ENCODE measurements at regions of chr15 and their contacts with region 1.

Region 1: GRCh38 chr15:90931737-90932659 is at the start of gene HDDC3:
- DNase-seq: peak; percentile 96
- ATAC-seq: peak; percentile 68
- H3K4me3 Mint-ChIP-seq: peak within 1 kb of the TSS; percentile 99
- H3K27ac Mint-ChIP-seq: peak within 1 kb of the TSS; percentile 99
- H3K4me1 Mint-ChIP-seq: peaks cover 47% of the 10 kb centered on the region
- H3K27me3 Mint-ChIP-seq: no peaks in the 10 kb centered on the region
- total RNA-seq, gene HDDC3: 34.2 to 41.2 TPM

Region 2: DNA sequence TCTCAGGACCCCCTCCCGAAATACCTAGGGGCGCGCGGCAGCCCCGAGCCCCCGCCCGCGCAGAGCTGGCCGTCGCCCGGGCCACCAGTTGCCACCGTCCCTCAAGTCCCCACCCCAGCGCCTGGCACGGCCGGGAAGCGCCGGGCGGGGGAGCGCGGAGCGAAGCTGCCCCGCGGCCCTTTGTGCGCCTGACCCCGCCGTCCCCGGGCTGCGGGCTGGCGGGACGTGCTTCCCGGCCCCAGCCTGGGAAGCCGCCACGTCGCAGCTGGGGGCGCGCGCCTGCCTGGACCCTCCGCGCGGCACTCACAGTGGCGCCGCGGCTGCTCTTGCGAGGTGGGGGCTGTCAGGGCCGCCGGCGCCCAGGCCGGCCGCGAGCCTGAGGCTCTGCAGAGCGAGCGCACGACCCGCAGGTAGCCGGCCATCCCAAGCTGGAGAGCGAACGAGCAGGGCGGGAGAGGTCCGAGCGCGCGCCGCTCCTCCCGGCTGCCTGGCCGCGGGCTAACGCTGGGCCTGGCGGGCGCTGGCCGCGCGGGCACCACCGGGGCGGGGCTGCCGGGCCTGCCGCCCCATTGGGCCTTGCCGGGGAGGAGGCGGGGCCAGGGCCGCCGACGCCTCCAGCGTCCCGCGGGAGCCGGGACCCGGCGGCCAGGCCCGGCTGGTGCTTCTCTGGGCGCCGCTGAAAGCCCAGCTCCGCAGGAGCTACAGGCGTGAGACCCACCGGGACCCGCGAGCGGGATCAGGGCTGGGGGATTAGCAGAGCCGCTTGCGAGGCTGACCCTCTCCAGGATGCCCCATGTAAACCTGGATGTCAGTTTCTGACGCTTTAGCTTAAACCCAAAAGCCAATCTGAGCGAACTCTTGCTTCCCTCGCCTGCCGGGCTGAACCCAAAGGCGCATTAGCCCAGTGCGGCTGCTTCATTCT is 829.8 kb before region 1 on chr15 and contains the start of gene IDH2:
- CTCF ChIA-PET with region 1: no interaction called
- POLR2A ChIA-PET with region 1: no interaction called
- intact Hi-C with region 1: loop called in 1 of 2 experiments (anchors 5 kb)
- DNase-seq: peak; percentile 85
- ATAC-seq: peak; percentile 73
- H3K4me3 Mint-ChIP-seq: peak within 1 kb of the TSS; percentile 86
- H3K27ac Mint-ChIP-seq: peak within 1 kb of the TSS; percentile 90
- H3K4me1 Mint-ChIP-seq: peaks cover 47% of the 10 kb centered on the region
- H3K27me3 Mint-ChIP-seq: no peaks in the 10 kb centered on the region
- total RNA-seq, gene IDH2: 176 to 182 TPM

Region 3: DNA sequence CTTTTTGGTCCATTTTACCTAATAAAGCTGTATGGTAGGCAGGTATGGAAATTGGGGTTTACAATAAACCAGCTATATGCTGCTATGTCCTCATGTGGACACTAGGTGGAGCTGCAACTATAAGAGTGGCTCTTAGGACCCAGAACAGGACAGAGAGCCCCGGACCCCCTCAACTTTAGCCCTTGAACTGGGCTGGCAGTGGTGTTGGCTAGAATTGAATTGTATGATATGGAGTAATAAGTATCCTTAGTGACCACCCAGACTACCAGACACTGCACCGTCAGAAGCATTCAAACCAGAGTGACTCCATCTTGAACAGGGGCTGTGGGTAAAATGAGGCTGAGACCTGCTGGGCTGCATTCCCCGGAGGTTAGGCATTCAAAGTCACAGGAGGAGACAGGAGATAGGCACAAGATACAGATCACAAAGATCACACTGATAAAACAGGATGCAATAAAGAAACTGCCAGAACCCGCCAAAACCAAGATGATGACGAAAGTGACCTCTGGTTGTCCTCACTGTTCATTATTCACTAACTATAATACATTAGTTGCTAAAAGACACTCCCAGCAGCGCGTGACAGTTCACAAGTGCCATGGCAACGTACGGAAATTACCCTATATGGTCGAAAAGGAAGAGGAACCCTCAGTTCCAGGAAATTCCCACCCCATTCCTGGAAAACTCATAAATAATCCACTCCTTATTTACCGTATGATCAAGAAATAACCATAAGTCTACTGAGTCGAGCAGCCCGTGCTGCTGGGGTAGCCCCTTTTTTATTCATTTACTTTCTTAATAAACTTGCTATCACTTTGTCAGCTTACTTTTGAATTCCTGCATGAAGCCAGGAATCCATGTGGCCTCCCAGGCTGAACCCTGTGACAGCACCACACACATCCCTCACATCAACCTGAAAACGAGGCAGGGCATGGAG is 283.6 kb before region 1 on chr15:
- CTCF ChIA-PET with region 1: interaction called, 13 read pairs
- POLR2A ChIA-PET with region 1: no interaction called
- intact Hi-C with region 1: loop called (anchors 1 kb)
- DNase-seq: peak; percentile 78
- ATAC-seq: peak; percentile 82
- H3K4me3 Mint-ChIP-seq: peak overlapping the region; percentile 39
- H3K27ac Mint-ChIP-seq: peak overlapping the region; percentile 93
- H3K4me1 Mint-ChIP-seq: peaks cover 28% of the 10 kb centered on the region
- H3K27me3 Mint-ChIP-seq: no peaks in the 10 kb centered on the region

Region 4: DNA sequence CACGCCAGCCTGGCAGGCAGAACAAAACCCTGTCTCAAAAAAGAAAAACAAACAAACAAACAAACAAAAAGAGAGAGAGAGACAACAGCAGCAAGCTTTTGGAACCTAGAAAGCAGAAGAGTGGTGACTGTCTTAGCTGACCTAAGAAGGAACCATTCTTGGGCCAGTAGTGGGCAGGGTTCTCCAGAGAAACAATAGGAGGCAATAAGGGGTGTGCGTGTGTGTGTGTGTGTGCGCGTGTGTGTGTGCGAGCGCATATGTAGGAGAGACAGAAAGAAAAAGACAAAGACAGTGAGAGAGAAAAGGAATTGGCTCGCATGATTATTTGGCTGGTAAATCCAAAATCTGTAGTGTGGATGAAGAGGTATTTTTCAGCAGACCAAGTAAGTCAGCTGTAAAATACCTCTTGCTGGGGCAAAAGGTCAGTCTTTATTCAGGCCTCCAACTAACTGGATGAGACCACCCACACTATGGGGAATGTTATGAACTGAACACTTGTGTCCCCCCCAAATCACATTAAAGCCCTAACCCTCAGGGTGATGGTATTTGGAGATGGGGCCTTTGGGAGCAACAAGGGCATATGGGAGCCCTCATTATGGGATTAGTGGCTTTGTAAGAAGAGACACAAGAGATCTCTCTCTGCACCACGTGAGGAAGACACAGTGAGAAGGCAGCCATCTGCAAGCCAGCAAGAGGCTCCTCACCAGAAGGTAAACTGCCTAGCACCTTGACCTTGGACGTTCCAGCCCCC is 229.9 kb before region 1 on chr15:
- CTCF ChIA-PET with region 1: no interaction called
- POLR2A ChIA-PET with region 1: no interaction called
- intact Hi-C with region 1: no loop called
- DNase-seq: no peak
- ATAC-seq: no peak
- H3K4me3 Mint-ChIP-seq: no peak overlapping the region
- H3K27ac Mint-ChIP-seq: no peak overlapping the region
- H3K4me1 Mint-ChIP-seq: peaks cover 3% of the 10 kb centered on the region
- H3K27me3 Mint-ChIP-seq: no peaks in the 10 kb centered on the region

Region 5: DNA sequence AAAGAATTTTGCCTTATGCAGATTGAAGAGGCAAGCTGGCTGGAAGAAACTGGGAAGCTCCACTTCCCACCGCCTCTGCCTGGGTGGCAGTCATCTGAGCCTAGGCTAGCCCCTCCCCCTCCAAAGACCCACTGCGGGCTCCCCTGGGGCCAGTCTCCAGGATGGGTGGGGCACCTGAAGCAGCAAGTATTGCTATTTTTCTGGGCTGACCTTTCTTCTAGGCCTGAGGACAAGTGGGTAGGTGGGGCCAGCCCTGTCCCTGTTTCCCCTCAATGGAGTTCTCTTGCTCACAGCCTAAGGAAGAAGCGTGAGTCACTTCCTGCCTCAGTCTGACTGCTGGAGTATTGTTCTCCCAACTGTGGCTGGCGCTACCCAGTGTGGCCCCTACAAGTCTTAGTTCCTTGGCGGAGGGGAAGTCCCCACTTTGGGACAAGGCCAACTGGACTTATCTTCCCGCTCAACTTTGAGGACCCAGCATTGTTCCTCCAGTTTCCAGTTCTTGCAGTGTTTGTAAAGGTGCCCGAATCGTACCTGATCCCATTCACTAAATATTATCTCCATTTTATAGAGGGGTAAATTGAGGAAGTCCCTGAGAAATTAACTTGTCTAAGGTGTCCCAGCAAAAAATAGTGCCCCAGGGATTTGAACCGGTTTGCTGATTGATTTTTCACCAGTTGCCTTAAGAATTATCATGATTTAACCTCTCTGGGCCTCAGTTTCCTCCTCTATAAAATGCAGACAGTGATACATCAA is 62.2 kb before region 1 on chr15:
- CTCF ChIA-PET with region 1: interaction called, 8 read pairs
- POLR2A ChIA-PET with region 1: no interaction called
- intact Hi-C with region 1: loop called (anchors 1 to 2 kb)
- DNase-seq: peak; percentile 78
- ATAC-seq: peak; percentile 65
- H3K4me3 Mint-ChIP-seq: peak overlapping the region; percentile 90
- H3K27ac Mint-ChIP-seq: peak overlapping the region; percentile 98
- H3K4me1 Mint-ChIP-seq: peaks cover 59% of the 10 kb centered on the region
- H3K27me3 Mint-ChIP-seq: peaks cover 5% of the 10 kb centered on the region

Region 6: DNA sequence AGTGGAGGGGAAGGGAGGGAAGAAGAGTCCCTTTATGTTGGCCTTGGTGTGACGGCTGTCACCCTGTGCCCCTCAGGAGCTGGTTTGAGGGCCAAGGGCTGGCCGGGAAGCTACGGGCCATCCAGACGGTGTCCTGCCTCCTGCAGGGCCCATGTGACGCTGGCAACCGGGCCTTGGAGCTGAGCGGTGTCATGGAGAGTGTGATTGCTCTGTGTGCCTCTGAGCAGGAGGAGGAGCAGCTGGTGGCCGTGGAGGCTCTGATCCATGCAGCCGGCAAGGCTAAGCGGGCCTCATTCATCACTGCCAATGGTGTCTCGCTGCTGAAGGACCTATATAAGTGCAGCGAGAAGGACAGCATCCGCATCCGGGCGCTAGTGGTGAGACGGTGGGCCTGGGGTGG is 14.5 kb after region 1 on chr15:
- CTCF ChIA-PET with region 1: interaction called, 42 read pairs
- POLR2A ChIA-PET with region 1: interaction called, 6 read pairs
- intact Hi-C with region 1: no loop called
- DNase-seq: no peak
- ATAC-seq: no peak
- H3K4me3 Mint-ChIP-seq: no peak overlapping the region
- H3K27ac Mint-ChIP-seq: no peak overlapping the region
- H3K4me1 Mint-ChIP-seq: no peaks in the 10 kb centered on the region
- H3K27me3 Mint-ChIP-seq: no peaks in the 10 kb centered on the region

Region 7: DNA sequence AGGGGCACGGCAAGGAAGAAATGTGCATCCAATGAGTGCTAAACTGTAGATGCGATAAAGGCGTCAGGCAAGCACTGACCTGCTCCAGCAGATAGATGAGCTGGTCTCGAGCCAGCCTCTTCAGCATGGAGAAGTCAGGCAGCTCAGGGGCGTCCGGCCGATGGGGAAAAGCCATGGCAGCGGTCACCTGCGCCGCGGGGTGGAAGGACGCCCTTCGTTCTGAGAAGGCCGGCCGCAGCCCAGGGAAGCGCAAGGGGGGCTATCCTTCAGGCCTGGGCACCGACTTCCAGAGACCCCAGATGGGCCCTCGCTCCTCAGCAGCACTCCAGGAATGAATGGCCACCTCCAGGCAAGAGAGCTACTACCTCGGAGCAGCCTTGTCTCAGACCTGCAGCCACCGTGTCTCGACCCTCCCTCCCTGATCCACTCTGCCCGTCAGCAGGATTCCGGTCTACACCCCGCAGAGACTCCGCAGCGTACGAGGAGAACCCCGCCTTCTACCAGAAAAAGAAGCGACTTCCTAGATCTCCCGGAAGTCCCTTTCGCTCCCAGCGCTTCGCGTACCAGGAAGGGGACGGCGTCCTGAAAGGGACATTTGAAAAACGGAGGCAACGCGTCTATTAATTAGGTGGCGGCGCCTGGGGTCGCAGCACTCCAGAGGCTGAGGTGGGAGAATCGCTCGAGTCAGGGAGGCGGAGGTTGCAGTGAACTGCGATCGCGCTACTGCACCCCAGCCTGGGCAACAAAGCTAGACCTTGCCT is 90.3 kb after region 1 on chr15 and contains the start of gene VPS33B:
- CTCF ChIA-PET with region 1: interaction called, 10 read pairs
- POLR2A ChIA-PET with region 1: interaction called, 3 read pairs
- intact Hi-C with region 1: loop called in 1 of 2 experiments (anchors 1 kb)
- DNase-seq: peak; percentile 84
- ATAC-seq: peak; percentile 81
- H3K4me3 Mint-ChIP-seq: peak within 1 kb of the TSS; percentile 89
- H3K27ac Mint-ChIP-seq: peak within 1 kb of the TSS; percentile 61
- H3K4me1 Mint-ChIP-seq: peaks cover 37% of the 10 kb centered on the region
- H3K27me3 Mint-ChIP-seq: no peaks in the 10 kb centered on the region
- total RNA-seq, gene VPS33B: 22.8 to 25.9 TPM